ENCODE measurements at regions of chr11 and their contacts with region 1.

Region 1: GRCh38 chr11:18526521-18527296 is at the start of gene TSG101:
- DNase-seq: peak; percentile 60 to 96
- H3K4me3 ChIP-seq: peak within 1 kb of the TSS; percentile 79 to 93
- H3K27ac ChIP-seq: peak within 1 kb of the TSS; percentile 90 to 94
- H3K4me1 ChIP-seq: peaks cover 0 to 7% of the 10 kb centered on the region in 2 donors
- H3K27me3 ChIP-seq: no peaks in the 10 kb centered on the region
- CTCF ChIP-seq: no peak
- total RNA-seq, gene TSG101: 20.3 TPM

Region 2: DNA sequence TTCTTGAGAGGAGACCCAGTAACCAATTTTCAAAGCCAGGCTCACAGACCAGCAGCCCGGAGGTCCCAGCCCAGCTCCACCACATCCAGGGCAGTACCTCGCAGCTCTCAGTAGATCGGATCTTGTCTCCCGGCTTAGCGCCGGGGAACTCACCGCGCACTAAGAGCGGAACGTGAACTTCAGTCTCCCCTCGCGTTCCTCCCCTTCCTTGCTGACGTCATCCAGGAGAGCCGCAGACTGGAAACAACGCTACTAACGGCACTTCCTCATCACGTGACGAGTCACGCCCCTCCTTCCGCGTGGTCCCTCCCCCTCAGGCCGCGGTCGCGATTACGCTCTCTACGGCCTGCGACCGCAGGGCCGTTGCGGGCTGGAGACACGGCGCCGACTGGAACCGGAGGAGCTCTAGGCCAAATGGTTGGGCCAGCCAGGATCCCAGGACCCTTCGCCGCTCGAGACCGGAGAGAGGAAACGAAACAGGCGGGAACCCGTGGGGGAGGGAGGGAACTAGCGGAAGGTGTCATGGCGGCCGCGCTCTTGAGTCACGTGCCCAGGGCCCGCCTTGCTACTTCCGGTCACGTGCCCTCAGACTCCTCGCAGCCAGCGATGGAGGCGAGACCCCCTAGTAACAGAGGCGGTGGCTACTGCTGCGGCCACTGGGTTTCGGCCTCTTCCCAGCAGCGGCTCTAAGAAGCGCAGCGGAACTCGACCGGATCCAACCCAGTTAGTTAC is 204.6 kb before region 1 on chr11 and contains the starts of genes GTF2H1 and HPS5:
- intact Hi-C with region 1: loop called (anchors 2 kb)
- DNase-seq: peak; percentile 87 to 98
- H3K4me3 ChIP-seq: peak within 1 kb of the TSS; percentile 65 to 93
- H3K27ac ChIP-seq: peak within 1 kb of the TSS; percentile 93 to 97
- H3K4me1 ChIP-seq: peaks cover 17 to 29% of the 10 kb centered on the region in 2 donors
- H3K27me3 ChIP-seq: no peaks in the 10 kb centered on the region
- CTCF ChIP-seq: no peak
- total RNA-seq, gene GTF2H1: 33.7 TPM
- total RNA-seq, gene HPS5: 31.7 TPM

Region 3: GRCh38 chr11:18383388-18384156 is 143.1 kb before region 1 on chr11:
- intact Hi-C with region 1: loop called (anchors 5 kb)
- DNase-seq: peak; percentile 88 to 98
- H3K4me3 ChIP-seq: peak overlapping the region in 1 of 2 donors; percentile 30
- H3K27ac ChIP-seq: peak overlapping the region; percentile 95 to 96
- H3K4me1 ChIP-seq: peaks cover 15 to 28% of the 10 kb centered on the region in 2 donors
- H3K27me3 ChIP-seq: no peaks in the 10 kb centered on the region
- CTCF ChIP-seq: no peak

Region 4: GRCh38 chr11:18698341-18699268 is 171.9 kb after region 1 on chr11 and contains the start of gene TMEM86A:
- intact Hi-C with region 1: loop called (anchors 2 kb)
- DNase-seq: peak; percentile 88 to 98
- H3K4me3 ChIP-seq: peak within 1 kb of the TSS; percentile 96 to 99
- H3K27ac ChIP-seq: peak within 1 kb of the TSS; percentile 73 to 84
- H3K4me1 ChIP-seq: peaks cover 0 to 5% of the 10 kb centered on the region in 2 donors
- H3K27me3 ChIP-seq: no peaks in the 10 kb centered on the region
- CTCF ChIP-seq: no peak
- total RNA-seq, gene TMEM86A: 4.8 TPM

Region 5: GRCh38 chr11:18785411-18785810 is 258.7 kb after region 1 on chr11:
- intact Hi-C with region 1: no loop called
- DNase-seq: no peak
- H3K4me3 ChIP-seq: no peak overlapping the region
- H3K27ac ChIP-seq: no peak overlapping the region
- H3K4me1 ChIP-seq: no peaks in the 10 kb centered on the region
- H3K27me3 ChIP-seq: no peaks in the 10 kb centered on the region
- CTCF ChIP-seq: no peak

Region 6: DNA sequence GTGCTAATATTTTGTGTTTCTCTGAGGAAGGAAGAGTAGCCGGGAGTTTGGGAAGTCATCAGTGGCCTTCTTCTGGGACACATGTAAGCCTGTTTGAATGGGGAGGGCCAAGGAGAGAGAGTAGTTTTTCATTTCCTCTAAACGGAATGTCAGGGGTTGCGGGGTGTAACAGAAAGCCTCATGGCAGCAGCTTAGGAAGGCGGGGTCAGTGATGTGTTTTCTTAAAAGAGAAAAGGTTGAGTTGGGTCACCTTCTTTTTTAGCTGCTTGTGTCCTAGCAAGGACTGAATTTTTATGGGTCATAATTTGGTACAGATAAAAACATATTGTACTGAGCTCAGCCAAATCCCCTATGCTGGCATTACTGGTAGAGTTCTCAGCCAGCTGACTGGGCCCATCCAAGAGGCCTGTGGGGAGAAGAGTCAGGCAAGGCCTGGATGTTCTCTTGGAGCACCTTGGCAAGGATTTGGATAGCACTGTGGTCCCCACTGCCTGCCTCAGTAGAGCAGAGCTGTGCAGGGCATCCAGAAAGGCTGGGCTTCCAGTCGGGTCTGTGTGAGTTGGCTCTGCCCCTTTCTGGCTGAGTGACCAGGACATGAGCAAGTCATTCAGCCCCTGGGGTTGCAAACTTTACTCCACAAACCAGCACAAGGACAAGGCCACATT is 1156.6 kb after region 1 on chr11:
- intact Hi-C with region 1: no loop called
- DNase-seq: peak in 1 of 2 donors; percentile 84
- H3K4me3 ChIP-seq: no peak overlapping the region
- H3K27ac ChIP-seq: peak overlapping the region; percentile 85 to 87
- H3K4me1 ChIP-seq: peaks cover 8 to 52% of the 10 kb centered on the region in 2 donors
- H3K27me3 ChIP-seq: no peaks in the 10 kb centered on the region
- CTCF ChIP-seq: no peak

Region 7: DNA sequence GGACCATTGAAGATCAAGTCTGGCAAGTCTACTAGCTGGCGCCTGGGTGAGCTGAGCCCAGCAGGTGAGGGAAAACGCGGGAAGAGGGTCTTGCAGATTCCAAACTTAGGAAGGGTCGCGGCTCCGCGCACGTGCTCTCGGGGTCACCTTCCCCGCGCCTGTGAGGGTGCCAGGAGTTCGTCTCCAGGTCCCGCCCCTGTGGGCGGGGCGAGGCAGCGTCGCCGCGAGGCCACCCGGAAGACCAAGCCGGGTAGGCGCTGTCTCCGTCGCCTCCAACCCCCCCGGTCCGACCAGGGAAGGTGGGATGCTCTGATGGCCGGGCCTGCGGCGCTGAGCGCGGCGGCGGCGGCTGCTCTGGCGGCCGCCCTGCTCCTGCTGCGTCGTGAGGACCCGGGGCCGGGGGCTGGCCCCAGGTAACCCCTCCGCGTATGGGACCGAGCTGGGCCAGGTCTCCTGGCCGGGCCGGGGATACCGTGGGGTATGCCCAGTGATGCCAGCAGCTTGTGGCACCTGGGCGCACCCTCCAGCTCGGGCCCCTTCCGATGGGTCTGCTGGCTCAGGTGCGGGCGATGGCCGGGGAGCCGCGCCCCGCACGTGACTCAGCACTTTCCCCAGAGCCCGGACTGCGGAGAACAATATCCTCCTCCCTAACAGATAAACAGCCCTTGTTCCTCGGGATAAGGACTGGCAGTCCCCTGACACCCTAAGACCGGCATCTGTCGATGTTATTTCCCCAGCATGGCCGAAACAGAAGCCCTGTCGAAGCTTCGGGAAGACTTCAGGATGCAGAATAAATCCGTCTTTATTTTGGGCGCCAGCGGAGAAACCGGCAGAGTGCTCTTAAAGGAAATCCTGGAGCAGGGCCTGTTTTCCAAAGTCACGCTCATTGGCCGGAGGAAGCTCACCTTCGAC is 1837.0 kb after region 1 on chr11 and contains the start of gene HTATIP2:
- intact Hi-C with region 1: loop called (anchors 5 kb)
- DNase-seq: peak in 1 of 2 donors; percentile 82
- H3K4me3 ChIP-seq: peak within 1 kb of the TSS; percentile 91 to 99
- H3K27ac ChIP-seq: peak within 1 kb of the TSS; percentile 78 to 95
- H3K4me1 ChIP-seq: peaks cover 4 to 14% of the 10 kb centered on the region in 2 donors
- H3K27me3 ChIP-seq: no peaks in the 10 kb centered on the region
- CTCF ChIP-seq: no peak
- total RNA-seq, gene HTATIP2: 34.6 TPM